ENCODE measurements at regions of chr13 and their contacts with region 1.

Region 1: DNA sequence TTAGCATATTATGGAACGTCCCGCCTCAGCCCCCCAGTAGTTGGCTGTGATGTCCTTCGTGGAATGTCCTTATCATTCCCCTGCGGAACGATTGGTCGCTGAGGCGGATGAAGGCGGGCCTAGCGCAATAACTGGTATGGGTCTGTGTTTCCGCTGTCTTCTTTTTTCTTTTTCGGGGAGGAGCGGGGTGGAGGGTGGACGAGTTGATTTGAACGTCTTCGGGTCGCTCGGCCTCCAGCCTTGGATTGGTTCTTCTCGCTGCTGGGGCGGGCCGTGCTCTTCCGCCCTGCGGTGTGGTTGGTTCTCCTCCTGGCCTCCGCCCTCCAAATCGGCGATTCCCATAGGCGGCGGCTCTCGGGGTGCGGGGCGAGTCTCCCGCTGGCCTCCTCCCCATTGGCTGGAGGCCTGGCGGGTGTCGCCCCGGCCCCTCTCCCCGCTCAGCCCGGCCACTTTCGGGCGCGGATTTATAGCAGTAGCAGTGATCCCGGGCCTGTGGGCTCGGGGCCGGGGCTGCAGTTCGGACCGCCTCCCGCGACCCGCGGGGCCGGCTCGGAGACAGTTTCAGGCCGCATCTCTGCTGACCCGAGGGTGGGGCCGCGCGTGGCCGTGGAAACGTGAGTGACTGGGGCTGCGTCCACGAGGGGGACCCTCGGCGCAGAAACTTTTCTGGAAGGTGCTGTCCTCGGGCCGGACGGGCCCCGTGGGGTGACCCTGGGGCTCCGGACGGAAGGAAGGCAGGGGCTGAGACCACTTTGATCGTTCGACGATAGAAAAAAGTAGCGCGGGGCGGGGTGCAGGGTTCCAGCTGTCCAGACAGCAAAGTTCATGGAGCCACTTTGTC is 2.1 kb downstream of the ING1 start:
- DNase-seq: peak; percentile 100
- H3K4me3 ChIP-seq: peak overlapping the region; percentile 72 to 87 (median 73)
- H3K27ac ChIP-seq: peak overlapping the region; percentile 75
- H3K4me1 ChIP-seq: peaks cover 15% of the 10 kb centered on the region
- H3K27me3 ChIP-seq: no peaks in the 10 kb centered on the region
- CTCF ChIP-seq: peak in 1 of 2 donors; percentile 18

Region 2: DNA sequence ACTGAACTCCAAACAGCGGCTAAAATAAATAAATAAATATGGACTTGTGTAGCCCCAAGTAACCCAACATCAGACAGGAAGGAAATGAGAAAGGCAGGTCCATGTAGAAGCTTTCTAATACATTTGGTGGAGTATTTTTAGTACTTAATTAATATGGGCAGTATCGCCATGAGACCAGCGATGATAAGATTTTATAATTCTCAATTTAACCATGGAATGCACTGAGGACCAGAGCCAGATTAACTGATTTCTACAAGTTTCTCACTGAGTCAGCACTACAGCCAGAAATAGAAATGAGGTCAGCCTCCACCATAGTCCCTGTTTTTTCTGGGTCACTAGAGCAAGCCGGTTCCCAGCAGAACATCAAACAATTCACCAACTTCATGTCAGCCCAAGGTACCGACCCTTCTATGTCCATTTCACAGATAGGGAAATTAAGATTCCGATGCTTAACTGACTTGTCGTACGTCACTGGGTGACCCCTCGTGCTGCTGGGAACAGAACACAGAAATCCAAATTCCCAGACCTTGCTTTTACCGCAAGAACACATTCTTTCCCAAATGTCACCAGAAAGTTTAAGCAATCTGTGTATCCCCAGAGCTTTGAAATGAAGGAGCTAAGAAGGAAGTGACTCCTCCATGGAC is 499.1 kb before region 1 on chr13:
- CTCF ChIA-PET with region 1: no interaction called
- dilution Hi-C with region 1: no loop called
- in situ Hi-C with region 1: no loop called
- intact Hi-C with region 1: loop called (anchors 5 kb)
- DNase-seq: no peak
- H3K4me3 ChIP-seq: no peak overlapping the region
- H3K27ac ChIP-seq: no peak overlapping the region
- H3K4me1 ChIP-seq: no peaks in the 10 kb centered on the region
- H3K27me3 ChIP-seq: no peaks in the 10 kb centered on the region
- CTCF ChIP-seq: no peak

Region 3: DNA sequence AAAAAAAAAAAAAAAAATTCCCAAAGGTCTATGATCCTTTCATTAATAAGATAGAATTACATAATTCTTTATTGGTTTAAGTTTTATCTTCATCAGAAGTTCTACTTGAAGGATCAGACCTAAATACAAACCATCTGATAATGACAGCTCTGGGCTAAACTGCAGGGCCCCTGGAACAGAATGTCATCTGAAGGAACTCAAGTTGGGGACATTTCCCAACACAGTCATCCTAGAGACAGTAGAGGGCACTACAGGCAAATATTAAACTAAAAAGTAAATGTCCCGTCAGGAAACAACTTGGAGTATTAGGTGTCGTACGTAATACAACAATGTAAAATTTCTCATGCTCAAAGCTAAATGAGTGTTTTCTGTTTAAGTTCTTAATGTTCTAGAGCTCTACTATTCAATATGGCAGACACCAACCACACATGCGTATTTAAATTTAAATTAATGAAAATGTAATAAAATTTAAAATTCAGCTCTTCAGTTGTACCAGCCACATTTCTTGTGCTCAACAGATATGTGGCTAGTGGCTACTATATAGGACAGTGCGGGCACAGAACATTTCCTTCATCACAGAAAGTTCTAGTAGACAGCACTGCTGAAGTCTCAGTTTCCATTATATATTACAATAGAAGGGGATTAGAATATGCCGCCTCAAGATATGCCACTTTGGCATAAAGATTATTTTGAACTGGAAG is 122.0 kb before region 1 on chr13:
- CTCF ChIA-PET with region 1: no interaction called
- dilution Hi-C with region 1: no loop called
- in situ Hi-C with region 1: no loop called
- intact Hi-C with region 1: loop called (anchors 10 kb)
- DNase-seq: peak; percentile 39
- H3K4me3 ChIP-seq: no peak overlapping the region
- H3K27ac ChIP-seq: no peak overlapping the region
- H3K4me1 ChIP-seq: peaks cover 16% of the 10 kb centered on the region
- H3K27me3 ChIP-seq: no peaks in the 10 kb centered on the region
- CTCF ChIP-seq: peak; percentile 51 to 61

Region 4: GRCh38 chr13:110615322-110616102 is 100.1 kb before region 1 on chr13 and contains the start of gene NAXD:
- CTCF ChIA-PET with region 1: no interaction called
- dilution Hi-C with region 1: no loop called
- in situ Hi-C with region 1: no loop called
- intact Hi-C with region 1: loop called (anchors 5 kb)
- DNase-seq: peak; percentile 93
- H3K4me3 ChIP-seq: peak within 1 kb of the TSS; percentile 62 to 83 (median 70)
- H3K27ac ChIP-seq: peak within 1 kb of the TSS; percentile 52
- H3K4me1 ChIP-seq: peaks cover 28% of the 10 kb centered on the region
- H3K27me3 ChIP-seq: no peaks in the 10 kb centered on the region
- CTCF ChIP-seq: no peak
- total RNA-seq, gene NAXD: 18.3 to 27.0 TPM

Region 5: DNA sequence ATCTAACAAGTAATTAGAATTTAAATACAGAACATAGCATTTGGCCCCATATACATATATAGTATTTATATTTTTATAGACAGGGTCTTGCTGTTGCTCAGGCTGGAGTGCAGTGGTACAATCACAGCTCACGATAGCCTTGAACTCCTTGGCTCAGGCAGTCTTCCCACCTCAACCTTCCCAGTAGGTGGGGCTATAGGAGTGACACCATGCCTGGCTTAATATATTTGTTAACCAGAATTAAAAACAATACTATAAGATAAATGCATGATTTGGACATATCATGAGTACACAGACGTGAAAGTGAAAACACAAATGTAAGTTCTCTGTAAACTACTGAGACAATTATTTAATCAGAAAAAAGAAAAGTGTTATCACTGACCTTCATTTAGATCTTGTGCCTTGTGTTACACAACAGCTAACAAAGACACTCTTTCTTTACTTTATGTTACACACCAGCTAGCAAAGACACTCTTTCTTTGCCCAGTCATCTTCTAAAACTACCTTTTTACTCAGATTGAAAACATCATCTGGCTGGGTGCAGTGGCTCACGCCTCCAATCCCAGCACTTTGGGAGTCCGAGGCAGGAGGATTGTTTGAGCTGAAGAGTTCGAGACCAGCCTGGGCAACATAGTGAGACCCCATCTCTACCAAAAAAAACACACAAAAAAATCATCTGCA is 32.3 kb before region 1 on chr13:
- CTCF ChIA-PET with region 1: interaction called, 3 read pairs
- dilution Hi-C with region 1: no loop called
- in situ Hi-C with region 1: no loop called
- intact Hi-C with region 1: loop called (anchors 1 kb)
- DNase-seq: peak; percentile 20
- H3K4me3 ChIP-seq: no peak overlapping the region
- H3K27ac ChIP-seq: no peak overlapping the region
- H3K4me1 ChIP-seq: no peaks in the 10 kb centered on the region
- H3K27me3 ChIP-seq: no peaks in the 10 kb centered on the region
- CTCF ChIP-seq: peak in 1 of 2 donors; percentile 37

Region 6: GRCh38 chr13:111429064-111429558 is 713.5 kb after region 1 on chr13:
- CTCF ChIA-PET with region 1: no interaction called
- dilution Hi-C with region 1: no loop called
- in situ Hi-C with region 1: no loop called
- intact Hi-C with region 1: no loop called
- DNase-seq: peak; percentile 4
- H3K4me3 ChIP-seq: no peak overlapping the region
- H3K27ac ChIP-seq: no peak overlapping the region
- H3K4me1 ChIP-seq: no peaks in the 10 kb centered on the region
- H3K27me3 ChIP-seq: no peaks in the 10 kb centered on the region
- CTCF ChIP-seq: peak; percentile 47 to 49

Measured in mammary epithelial cell (primary cell).